IMR-90 (cell line): ENCODE measurements at regions of chr5 and their contacts with region 1.

Region 1: GRCh38 chr5:126477294-126478117 is 54.3 kb downstream of the GRAMD2B start:
- DNase-seq: peak; percentile 46
- ATAC-seq: no peak
- H3K4me3 ChIP-seq: no peak overlapping the region
- H3K27ac ChIP-seq: no peak overlapping the region; the same call in 1 of the 2 replicates
- H3K4me1 ChIP-seq: peaks cover 6% of the 10 kb centered on the region
- H3K27me3 ChIP-seq: no peaks in the 10 kb centered on the region
- CTCF ChIP-seq: no peak
- POLR2A ChIP-seq: no peak
- RAD21 ChIP-seq: no peak

Region 2: GRCh38 chr5:126422989-126423788 is 54.3 kb before region 1 on chr5 and contains the start of gene GRAMD2B:
- CTCF ChIA-PET with region 1: no interaction called
- POLR2A ChIA-PET with region 1: no interaction called
- dilution Hi-C with region 1: no loop called
- in situ Hi-C with region 1: no loop called
- intact Hi-C with region 1: loop called (anchors 5 kb)
- DNase-seq: peak; percentile 88
- ATAC-seq: peak; percentile 98
- H3K4me3 ChIP-seq: peak within 1 kb of the TSS; percentile 90
- H3K27ac ChIP-seq: peak within 1 kb of the TSS; percentile 90
- H3K4me1 ChIP-seq: peaks cover 3% of the 10 kb centered on the region; the same call in 1 of the 2 replicates
- H3K27me3 ChIP-seq: no peaks in the 10 kb centered on the region
- CTCF ChIP-seq: no peak
- POLR2A ChIP-seq: peak; percentile 84
- RAD21 ChIP-seq: peak; percentile 24
- total RNA-seq, gene GRAMD2B: 15.8 and 20.3 TPM in 2 replicates